Transverse colon (tissue), 4 donors: ENCODE measurements at regions of chr11 and their contacts with region 1.

Region 1: DNA sequence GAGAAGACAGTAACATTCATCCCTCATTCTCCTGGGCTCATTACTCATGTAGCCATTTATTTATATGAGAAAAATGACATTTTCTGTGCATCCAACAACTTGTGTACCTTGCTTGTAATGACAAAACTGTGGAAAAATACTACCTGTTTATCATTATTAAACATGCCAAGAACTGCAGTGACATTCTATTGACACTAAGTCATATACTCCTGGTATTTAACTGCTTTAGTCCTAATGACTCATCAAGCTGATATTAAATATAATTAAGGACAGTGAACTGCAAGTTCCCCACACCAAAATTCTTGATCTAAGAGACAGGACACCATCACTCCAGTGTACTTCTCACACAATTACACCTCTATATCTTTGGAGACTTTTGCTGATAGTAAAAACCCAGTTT is 1328.7 kb upstream of the RAG2 start:
- DNase-seq: no peak
- H3K4me3 ChIP-seq: no peak overlapping the region
- H3K27ac ChIP-seq: no peak overlapping the region
- H3K4me1 ChIP-seq: no peaks in the 10 kb centered on the region
- H3K27me3 ChIP-seq: no peaks in the 10 kb centered on the region
- CTCF ChIP-seq: no peak
- EP300 ChIP-seq: no peak
- POLR2A ChIP-seq: no peak

Region 2: DNA sequence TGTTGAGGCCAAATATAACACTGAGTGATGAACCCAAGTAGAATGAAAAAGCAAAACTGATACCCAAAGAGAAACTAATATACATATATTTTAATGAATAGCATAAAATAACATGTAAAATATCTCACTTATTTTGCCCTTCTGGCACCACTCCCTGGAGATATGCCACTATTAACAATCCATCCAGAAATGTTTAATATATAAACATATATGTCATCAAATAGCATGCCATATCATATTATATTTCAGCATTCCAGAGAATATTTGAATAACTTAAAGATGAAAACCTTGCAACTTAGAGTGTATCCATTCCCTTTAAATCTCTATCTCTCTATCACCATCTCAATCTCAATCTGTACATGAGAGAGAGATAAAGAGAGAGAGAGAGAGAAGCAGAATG is 255.5 kb before region 1 on chr11:
- in situ Hi-C with region 1: no loop called
- intact Hi-C with region 1: no loop called
- DNase-seq: no peak
- H3K4me3 ChIP-seq: no peak overlapping the region
- H3K27ac ChIP-seq: no peak overlapping the region
- H3K4me1 ChIP-seq: no peaks in the 10 kb centered on the region
- H3K27me3 ChIP-seq: no peaks in the 10 kb centered on the region
- CTCF ChIP-seq: no peak
- EP300 ChIP-seq: no peak
- POLR2A ChIP-seq: no peak

Region 3: GRCh38 chr11:37905707-37906417 is 20.9 kb before region 1 on chr11:
- in situ Hi-C with region 1: no loop called
- intact Hi-C with region 1: loop called (anchors 1 kb)
- DNase-seq: peak; percentile 53
- H3K4me3 ChIP-seq: no peak overlapping the region
- H3K27ac ChIP-seq: no peak overlapping the region
- H3K4me1 ChIP-seq: no peaks in the 10 kb centered on the region
- H3K27me3 ChIP-seq: no peaks in the 10 kb centered on the region
- CTCF ChIP-seq: no peak
- EP300 ChIP-seq: no peak
- POLR2A ChIP-seq: no peak

Region 4: GRCh38 chr11:38089726-38090125 is 163.0 kb after region 1 on chr11:
- in situ Hi-C with region 1: no loop called
- intact Hi-C with region 1: no loop called
- DNase-seq: no peak
- H3K4me3 ChIP-seq: no peak overlapping the region
- H3K27ac ChIP-seq: no peak overlapping the region
- H3K4me1 ChIP-seq: no peaks in the 10 kb centered on the region
- H3K27me3 ChIP-seq: no peaks in the 10 kb centered on the region
- CTCF ChIP-seq: no peak
- EP300 ChIP-seq: no peak
- POLR2A ChIP-seq: no peak